Ascending aorta (tissue), 2 donors: ENCODE measurements at regions of chr7 and their contacts with region 1.

Region 1: GRCh38 chr7:41472427-41473125 is 230.3 kb downstream of the INHBA start:
- DNase-seq: no peak
- H3K4me3 ChIP-seq: peak overlapping the region in 1 of 2 donors; percentile 52
- H3K27ac ChIP-seq: peak overlapping the region; percentile 55 to 60
- H3K4me1 ChIP-seq: peaks cover 0 to 16% of the 10 kb centered on the region in 2 donors
- H3K27me3 ChIP-seq: no peaks in the 10 kb centered on the region
- CTCF ChIP-seq: no peak

Region 2: GRCh38 chr7:40780460-40780859 is 692.1 kb before region 1 on chr7:
- intact Hi-C with region 1: loop called (anchors 10 kb)
- DNase-seq: no peak
- H3K4me3 ChIP-seq: peak overlapping the region in 1 of 2 donors; percentile 39
- H3K27ac ChIP-seq: peak overlapping the region; percentile 50 to 74
- H3K4me1 ChIP-seq: peaks cover 0 to 21% of the 10 kb centered on the region in 2 donors
- H3K27me3 ChIP-seq: no peaks in the 10 kb centered on the region
- CTCF ChIP-seq: no peak

Region 3: DNA sequence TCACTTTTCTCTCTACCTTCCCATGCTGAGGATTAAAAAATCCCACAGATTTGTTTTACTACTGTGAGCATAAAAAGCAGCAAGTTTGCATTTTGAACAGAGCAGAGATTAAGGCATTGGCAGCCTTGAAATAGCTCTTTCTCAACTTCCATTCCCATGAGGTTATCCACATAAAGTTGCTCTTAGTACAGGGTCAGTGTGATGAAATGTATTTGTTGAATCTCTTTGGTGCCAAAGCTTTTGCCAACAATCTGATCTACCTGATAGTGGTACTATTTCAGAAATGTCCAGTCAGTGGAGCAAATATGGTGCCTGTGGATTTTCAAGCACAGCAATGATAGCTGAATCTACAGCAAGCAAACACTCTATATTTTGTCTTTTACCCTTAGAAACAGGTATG is 24.5 kb before region 1 on chr7:
- intact Hi-C with region 1: no loop called
- DNase-seq: no peak
- H3K4me3 ChIP-seq: no peak overlapping the region
- H3K27ac ChIP-seq: peak overlapping the region; percentile 66 to 78
- H3K4me1 ChIP-seq: peaks cover 3 to 26% of the 10 kb centered on the region in 2 donors
- H3K27me3 ChIP-seq: no peaks in the 10 kb centered on the region
- CTCF ChIP-seq: no peak